ENCODE measurements at regions of chr20 and their contacts with region 1.

Region 1: DNA sequence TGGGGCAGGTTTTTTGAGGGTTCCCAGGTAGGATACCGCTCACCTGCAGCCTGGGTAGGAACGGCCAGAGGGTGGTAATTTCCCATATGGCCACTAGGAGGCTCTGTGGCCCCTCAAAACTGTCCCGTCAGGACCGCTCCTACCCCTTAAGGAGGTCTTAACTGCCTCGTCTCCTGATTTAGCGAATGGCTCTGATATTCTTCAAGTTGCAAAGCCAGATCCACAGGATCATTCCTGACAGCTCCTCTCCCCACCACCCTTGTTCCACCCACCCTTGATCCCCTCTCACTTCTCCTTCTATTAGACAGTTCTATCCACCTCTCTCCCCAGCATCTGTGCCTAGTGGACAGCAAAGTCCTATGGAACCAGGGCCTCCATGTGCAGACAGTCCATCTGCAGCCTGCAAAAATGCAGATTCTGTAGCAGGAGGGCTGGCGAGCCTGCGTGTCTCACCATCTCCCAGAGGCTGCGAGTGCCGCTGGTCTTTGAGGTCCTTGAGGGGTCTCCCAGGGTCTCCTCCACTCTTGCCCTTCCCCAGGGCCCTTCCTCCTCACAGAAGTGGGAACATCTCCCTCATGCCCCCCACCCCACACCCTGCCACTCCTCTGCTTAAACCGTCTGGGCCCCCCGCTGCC is 34.3 kb upstream of the ZBP1 start:
- DNase-seq: peak; percentile 61
- ATAC-seq: peak; percentile 79
- H3K4me3 ChIP-seq: no peak overlapping the region
- H3K27ac ChIP-seq: no peak overlapping the region
- H3K4me1 ChIP-seq: no peaks in the 10 kb centered on the region
- H3K27me3 ChIP-seq: no peaks in the 10 kb centered on the region
- CTCF ChIP-seq: peak; percentile 91

Region 2: GRCh38 chr20:58087193-58087858 is 432.8 kb after region 1 on chr20:
- intact Hi-C with region 1: loop called (anchors 10 kb)
- DNase-seq: no peak
- ATAC-seq: peak; percentile 79
- H3K4me3 ChIP-seq: no peak overlapping the region
- H3K27ac ChIP-seq: no peak overlapping the region
- H3K4me1 ChIP-seq: no peaks in the 10 kb centered on the region
- H3K27me3 ChIP-seq: no peaks in the 10 kb centered on the region
- CTCF ChIP-seq: peak; percentile 84

Region 3: GRCh38 chr20:58179432-58180099 is 525.1 kb after region 1 on chr20:
- intact Hi-C with region 1: loop called (anchors 10 kb)
- DNase-seq: peak; percentile 81
- ATAC-seq: peak; percentile 91
- H3K4me3 ChIP-seq: peak overlapping the region; percentile 39
- H3K27ac ChIP-seq: no peak overlapping the region
- H3K4me1 ChIP-seq: peaks cover 10% of the 10 kb centered on the region
- H3K27me3 ChIP-seq: no peaks in the 10 kb centered on the region
- CTCF ChIP-seq: peak; percentile 99

Measured in upper lobe of right lung (tissue), 1 donor.